MCF 10A (cell line): ENCODE measurements at regions of chr3 and their contacts with region 1.

Region 1: GRCh38 chr3:195850857-195851543 is 39.3 kb upstream of the MUC4 start:
- DNase-seq: peak; percentile 91
- H3K4me3 Mint-ChIP-seq: no peak overlapping the region
- H3K27ac Mint-ChIP-seq: no peak overlapping the region
- H3K4me1 Mint-ChIP-seq: no peaks in the 10 kb centered on the region
- H3K27me3 Mint-ChIP-seq: peaks cover under 1% of the 10 kb centered on the region
- CTCF ChIP-seq: peak; percentile 100

Region 2: GRCh38 chr3:195829897-195830254 is 21.1 kb before region 1 on chr3:
- CTCF ChIA-PET with region 1: interaction called, 13 read pairs
- POLR2A ChIA-PET with region 1: no interaction called
- intact Hi-C with region 1: no loop called
- DNase-seq: no peak
- H3K4me3 Mint-ChIP-seq: no peak overlapping the region
- H3K27ac Mint-ChIP-seq: no peak overlapping the region
- H3K4me1 Mint-ChIP-seq: no peaks in the 10 kb centered on the region
- H3K27me3 Mint-ChIP-seq: no peaks in the 10 kb centered on the region
- CTCF ChIP-seq: no peak

Region 3: GRCh38 chr3:195839282-195840010 is 11.6 kb before region 1 on chr3:
- CTCF ChIA-PET with region 1: interaction called, 25 read pairs
- POLR2A ChIA-PET with region 1: no interaction called
- intact Hi-C with region 1: no loop called
- DNase-seq: no peak
- H3K4me3 Mint-ChIP-seq: no peak overlapping the region
- H3K27ac Mint-ChIP-seq: no peak overlapping the region
- H3K4me1 Mint-ChIP-seq: no peaks in the 10 kb centered on the region
- H3K27me3 Mint-ChIP-seq: peaks cover 51% of the 10 kb centered on the region
- CTCF ChIP-seq: no peak

Region 4: DNA sequence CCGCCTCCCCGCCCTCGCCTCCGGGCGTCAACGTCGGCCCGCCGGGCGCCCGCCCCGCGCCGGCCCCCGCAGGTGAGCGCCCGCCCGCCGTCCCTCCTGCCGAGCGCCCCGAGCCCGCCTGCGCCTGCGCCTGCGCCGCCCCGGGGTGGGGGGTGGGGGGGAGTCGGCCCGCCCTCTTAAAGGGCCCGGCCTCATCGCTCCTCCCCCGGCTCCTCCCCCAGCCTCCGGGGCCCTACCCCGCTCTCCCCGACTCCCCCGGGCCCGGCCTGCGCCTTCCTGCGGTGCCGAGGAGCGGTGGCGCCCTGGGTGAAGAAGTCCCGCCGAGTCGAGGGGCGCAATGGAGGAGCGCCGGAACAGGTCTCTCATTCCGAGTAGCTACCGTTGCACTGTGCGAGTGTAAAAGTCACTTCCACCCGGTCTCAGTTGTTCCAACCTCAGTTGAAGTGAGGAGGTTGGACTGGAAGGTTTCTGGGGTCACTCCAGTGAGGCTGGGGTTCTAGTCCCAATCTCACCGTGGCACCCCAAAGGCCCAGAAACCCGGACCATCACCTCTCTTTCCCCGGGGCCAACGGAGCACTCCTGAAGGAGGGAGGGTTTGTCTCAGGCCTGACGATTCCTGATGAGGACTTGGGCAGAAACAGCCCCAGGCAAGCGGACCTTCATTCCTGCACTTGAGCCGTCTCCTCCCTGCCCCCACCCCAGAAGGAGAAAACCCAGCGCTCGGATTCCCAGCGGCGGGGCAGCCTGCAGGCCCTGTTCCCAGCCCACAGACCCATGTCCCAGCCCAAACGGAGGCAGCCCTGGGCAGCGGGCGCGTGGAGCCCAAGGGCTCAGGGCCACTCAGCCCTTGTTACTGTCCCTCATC is 58.9 kb after region 1 on chr3:
- CTCF ChIA-PET with region 1: interaction called, 13 read pairs
- POLR2A ChIA-PET with region 1: interaction called, 5 read pairs
- intact Hi-C with region 1: no loop called
- DNase-seq: peak; percentile 81
- H3K4me3 Mint-ChIP-seq: peak overlapping the region; percentile 83
- H3K27ac Mint-ChIP-seq: no peak overlapping the region
- H3K4me1 Mint-ChIP-seq: peaks cover 46% of the 10 kb centered on the region
- H3K27me3 Mint-ChIP-seq: no peaks in the 10 kb centered on the region
- CTCF ChIP-seq: no peak

Region 5: DNA sequence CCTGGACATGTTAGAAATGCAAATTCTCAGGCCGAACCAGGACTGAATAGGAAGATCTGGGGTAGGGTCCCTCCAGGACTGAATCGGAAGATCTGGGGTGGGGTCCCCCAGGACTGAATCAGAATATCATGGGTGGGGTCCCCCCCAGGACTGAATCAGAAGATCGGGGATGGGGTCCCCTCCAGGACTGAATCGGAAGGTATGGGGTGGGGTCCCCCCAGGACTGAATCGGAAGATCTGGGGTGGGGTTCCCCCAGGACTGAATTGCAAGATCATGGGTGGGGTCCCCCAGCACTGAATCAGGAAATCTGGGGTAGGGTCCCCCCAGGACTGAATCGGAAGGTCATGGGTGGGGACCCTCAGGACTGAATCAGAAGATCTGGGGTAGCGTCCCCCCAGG is 105.6 kb after region 1 on chr3:
- CTCF ChIA-PET with region 1: no interaction called
- POLR2A ChIA-PET with region 1: no interaction called
- intact Hi-C with region 1: no loop called
- DNase-seq: no peak
- H3K4me3 Mint-ChIP-seq: no peak overlapping the region
- H3K27ac Mint-ChIP-seq: no peak overlapping the region
- H3K4me1 Mint-ChIP-seq: no peaks in the 10 kb centered on the region
- H3K27me3 Mint-ChIP-seq: no peaks in the 10 kb centered on the region
- CTCF ChIP-seq: no peak